Cardiac septum (tissue), 1 donor: ENCODE measurements at regions of chr22 and their contacts with region 1.

Region 1: GRCh38 chr22:33781411-33781810 is 138.9 kb downstream of the LARGE1 start:
- DNase-seq: no peak

Region 2: DNA sequence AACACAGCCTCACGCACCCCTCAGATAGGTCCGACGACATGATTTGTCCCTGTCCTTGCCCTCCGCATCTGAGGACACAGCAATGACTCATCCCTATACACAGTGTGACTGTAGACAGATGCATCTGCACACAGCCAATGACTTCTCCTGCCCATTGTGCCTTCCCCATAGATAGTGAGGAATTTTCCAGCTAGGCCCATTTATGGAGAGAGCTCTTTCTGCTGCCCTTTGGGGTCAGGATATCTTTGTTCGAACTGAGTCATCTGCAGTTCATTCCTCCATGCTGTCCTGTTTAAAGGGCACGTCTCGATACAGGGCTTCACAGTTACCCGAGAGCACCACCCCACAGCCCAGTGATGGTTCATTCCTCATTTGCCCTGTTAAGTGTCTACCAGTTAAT is 42.1 kb after region 1 on chr22:
- intact Hi-C with region 1: loop called (anchors 5 kb)
- DNase-seq: no peak

Region 3: DNA sequence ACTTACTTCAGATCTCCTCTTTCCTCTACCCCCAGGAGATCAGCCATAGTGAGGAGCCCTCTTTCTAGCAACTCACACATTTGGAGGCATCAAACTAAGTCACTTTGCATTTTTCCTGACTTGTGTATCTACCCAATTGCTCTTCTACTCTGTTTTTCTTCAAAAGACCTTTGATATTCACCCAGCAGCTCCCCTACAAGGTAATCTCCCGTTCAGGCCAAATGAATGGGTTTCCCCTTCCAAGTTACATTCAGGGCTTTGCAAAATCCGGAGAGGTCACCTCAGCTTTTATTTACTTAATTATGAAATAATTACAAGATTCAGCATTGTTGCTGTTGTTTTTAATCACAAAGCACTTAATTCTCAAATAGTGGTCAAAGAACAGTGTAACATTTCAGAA is 132.7 kb after region 1 on chr22:
- intact Hi-C with region 1: no loop called
- DNase-seq: no peak